MCF 10A (cell line): ENCODE measurements at regions of chr7 and their contacts with region 1.

Region 1: DNA sequence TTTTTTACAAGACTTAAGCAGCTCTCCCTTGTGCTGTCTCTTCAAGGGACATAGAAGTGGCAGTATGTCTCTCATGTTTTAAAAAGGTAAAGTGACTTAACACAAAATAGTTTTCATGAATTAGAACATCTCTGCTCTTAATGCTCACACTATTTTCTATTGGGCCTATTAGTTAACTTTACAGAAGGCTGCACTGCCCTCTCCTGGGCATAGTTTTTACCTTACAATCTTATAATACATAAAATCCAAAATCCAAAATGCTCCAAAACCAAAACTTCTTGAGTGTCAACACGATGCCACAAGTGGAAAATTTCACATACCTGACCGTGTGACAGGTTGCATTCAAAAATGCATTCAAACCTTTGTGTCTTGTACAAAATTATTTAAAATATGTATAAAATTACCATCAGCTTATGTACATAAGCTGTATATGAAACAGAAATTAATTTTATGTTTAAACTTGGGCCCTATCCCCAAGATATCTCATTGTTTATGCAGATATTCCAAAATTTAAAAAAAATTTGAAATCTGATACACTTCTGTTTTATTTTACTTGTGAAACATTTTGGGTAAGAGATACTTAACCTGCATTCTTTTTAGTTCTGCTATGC is 25.8 kb downstream of the TES start:
- DNase-seq: peak; percentile 68
- H3K4me3 Mint-ChIP-seq: no peak overlapping the region
- H3K27ac Mint-ChIP-seq: no peak overlapping the region
- H3K4me1 Mint-ChIP-seq: peaks cover 9% of the 10 kb centered on the region
- H3K27me3 Mint-ChIP-seq: no peaks in the 10 kb centered on the region
- CTCF ChIP-seq: peak; percentile 32

Region 2: GRCh38 chr7:116173051-116174028 is 62.8 kb before region 1 on chr7:
- CTCF ChIA-PET with region 1: interaction called, 409 read pairs
- POLR2A ChIA-PET with region 1: interaction called, 47 read pairs
- intact Hi-C with region 1: loop called (anchors 2 kb)
- DNase-seq: peak; percentile 65
- H3K4me3 Mint-ChIP-seq: no peak overlapping the region
- H3K27ac Mint-ChIP-seq: no peak overlapping the region
- H3K4me1 Mint-ChIP-seq: peaks cover 23% of the 10 kb centered on the region
- H3K27me3 Mint-ChIP-seq: peaks cover 20% of the 10 kb centered on the region
- CTCF ChIP-seq: peak; percentile 56

Region 3: DNA sequence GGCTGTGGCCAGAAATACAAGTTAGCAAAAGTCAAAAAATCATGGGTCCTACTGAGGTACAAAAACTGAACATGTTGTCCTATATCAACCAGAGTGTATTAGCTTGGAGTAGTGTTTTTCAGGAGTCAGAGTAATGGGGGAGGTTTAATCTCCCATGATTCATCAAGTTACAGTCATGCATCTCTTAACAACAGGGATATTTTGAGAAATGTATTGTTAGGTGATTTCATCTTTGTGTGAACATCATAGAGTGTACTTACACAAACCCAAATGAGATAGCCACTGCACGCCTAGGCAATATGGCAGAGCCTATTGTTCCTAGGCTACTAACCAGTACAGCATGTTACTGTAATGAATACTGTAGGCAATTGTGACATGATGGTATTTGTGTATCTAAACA is 40.7 kb before region 1 on chr7:
- CTCF ChIA-PET with region 1: interaction called, 14 read pairs
- POLR2A ChIA-PET with region 1: no interaction called
- intact Hi-C with region 1: no loop called
- DNase-seq: no peak
- H3K4me3 Mint-ChIP-seq: no peak overlapping the region
- H3K27ac Mint-ChIP-seq: no peak overlapping the region
- H3K4me1 Mint-ChIP-seq: peaks cover 6% of the 10 kb centered on the region
- H3K27me3 Mint-ChIP-seq: no peaks in the 10 kb centered on the region
- CTCF ChIP-seq: no peak

Region 4: GRCh38 chr7:116218051-116218645 is 18.0 kb before region 1 on chr7:
- CTCF ChIA-PET with region 1: interaction called, 29 read pairs
- POLR2A ChIA-PET with region 1: interaction called, 110 read pairs
- intact Hi-C with region 1: no loop called
- DNase-seq: peak; percentile 62
- H3K4me3 Mint-ChIP-seq: no peak overlapping the region
- H3K27ac Mint-ChIP-seq: peak overlapping the region; percentile 81
- H3K4me1 Mint-ChIP-seq: peaks cover 37% of the 10 kb centered on the region
- H3K27me3 Mint-ChIP-seq: no peaks in the 10 kb centered on the region
- CTCF ChIP-seq: no peak

Region 5: GRCh38 chr7:116269466-116269865 is 33.3 kb after region 1 on chr7:
- CTCF ChIA-PET with region 1: no interaction called
- POLR2A ChIA-PET with region 1: no interaction called
- intact Hi-C with region 1: no loop called
- DNase-seq: no peak
- H3K4me3 Mint-ChIP-seq: no peak overlapping the region
- H3K27ac Mint-ChIP-seq: peak overlapping the region; percentile 33
- H3K4me1 Mint-ChIP-seq: peaks cover 56% of the 10 kb centered on the region
- H3K27me3 Mint-ChIP-seq: no peaks in the 10 kb centered on the region
- CTCF ChIP-seq: no peak

Region 6: GRCh38 chr7:116327752-116328151 is 91.6 kb after region 1 on chr7:
- CTCF ChIA-PET with region 1: no interaction called
- POLR2A ChIA-PET with region 1: no interaction called
- intact Hi-C with region 1: no loop called
- DNase-seq: no peak
- H3K4me3 Mint-ChIP-seq: no peak overlapping the region
- H3K27ac Mint-ChIP-seq: no peak overlapping the region
- H3K4me1 Mint-ChIP-seq: peaks cover 7% of the 10 kb centered on the region
- H3K27me3 Mint-ChIP-seq: no peaks in the 10 kb centered on the region
- CTCF ChIP-seq: no peak

Region 7: DNA sequence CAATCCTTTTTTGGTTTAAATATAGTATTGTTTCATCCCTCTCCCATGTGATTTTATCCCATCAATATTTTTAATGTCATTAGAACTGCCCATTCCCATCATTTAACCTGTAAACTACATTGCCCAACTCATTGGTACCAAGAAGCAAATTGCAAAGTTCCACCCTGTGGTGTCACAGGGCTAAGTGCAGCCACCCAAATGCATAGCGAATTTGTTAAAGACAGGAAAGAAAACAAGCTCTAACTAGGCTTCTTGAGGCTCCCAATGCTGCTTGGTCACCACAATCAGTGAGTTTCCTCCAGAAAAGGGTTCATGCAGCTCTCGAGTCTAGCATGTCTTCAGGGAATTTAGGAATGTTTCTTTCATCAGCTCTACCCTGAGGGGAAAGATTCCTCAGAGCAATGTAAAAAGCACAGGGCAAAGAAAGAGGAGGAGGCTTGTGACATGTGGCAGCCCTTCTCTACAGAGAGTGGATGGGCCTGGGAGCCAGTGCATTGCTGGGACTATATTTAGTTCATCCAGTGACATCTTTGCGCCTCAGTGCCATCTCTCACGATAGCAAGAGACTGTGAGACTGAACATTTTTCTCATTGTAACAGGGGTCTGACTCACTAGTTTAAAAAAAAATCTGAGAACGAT is 346.8 kb after region 1 on chr7:
- CTCF ChIA-PET with region 1: interaction called, 12 read pairs
- POLR2A ChIA-PET with region 1: no interaction called
- intact Hi-C with region 1: loop called (anchors 5 kb)
- DNase-seq: peak; percentile 38
- H3K4me3 Mint-ChIP-seq: no peak overlapping the region
- H3K27ac Mint-ChIP-seq: peak overlapping the region; percentile 62
- H3K4me1 Mint-ChIP-seq: peaks cover 17% of the 10 kb centered on the region
- H3K27me3 Mint-ChIP-seq: no peaks in the 10 kb centered on the region
- CTCF ChIP-seq: no peak